ENCODE measurements at regions of chr18 and their contacts with region 1.

Region 1: DNA sequence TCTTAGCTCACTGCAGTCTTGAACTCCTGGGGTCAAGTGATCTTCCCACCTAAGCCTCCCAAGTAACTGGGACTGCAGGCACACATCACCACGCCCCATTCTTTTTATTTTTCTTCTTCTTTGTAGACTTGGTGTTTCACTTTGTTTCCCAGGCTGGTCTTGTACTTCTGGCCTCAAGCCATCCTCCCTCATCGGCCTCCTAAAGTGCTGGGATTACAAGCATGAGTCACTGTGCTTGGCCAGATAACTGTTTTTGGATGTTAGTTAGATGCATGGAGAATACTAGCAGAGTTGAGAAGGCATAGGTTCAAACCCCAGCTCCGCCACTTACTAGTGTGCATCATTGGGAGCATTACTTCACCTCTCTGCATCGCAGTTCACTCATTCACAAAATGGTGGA is 88.3 kb downstream of the TXNL1 start:
- DNase-seq: no peak
- ATAC-seq: no peak
- H3K4me3 ChIP-seq: no peak overlapping the region
- H3K27ac ChIP-seq: no peak overlapping the region
- H3K4me1 ChIP-seq: no peaks in the 10 kb centered on the region
- H3K27me3 ChIP-seq: no peaks in the 10 kb centered on the region
- CTCF ChIP-seq: no peak
- EP300 ChIP-seq: no peak
- POLR2A ChIP-seq: no peak
- RAD21 ChIP-seq: no peak

Region 2: GRCh38 chr18:56351911-56352500 is 198.1 kb before region 1 on chr18:
- CTCF ChIA-PET with region 1: no interaction called
- POLR2A ChIA-PET with region 1: no interaction called
- RAD21 ChIA-PET with region 1: no interaction called
- SMC1A ChIA-PET with region 1: no interaction called
- in situ Hi-C with region 1: no loop called
- intact Hi-C with region 1: no loop called
- DNase-seq: no peak
- ATAC-seq: no peak
- H3K4me3 ChIP-seq: no peak overlapping the region
- H3K27ac ChIP-seq: no peak overlapping the region
- H3K4me1 ChIP-seq: no peaks in the 10 kb centered on the region
- H3K27me3 ChIP-seq: no peaks in the 10 kb centered on the region
- CTCF ChIP-seq: no peak
- EP300 ChIP-seq: no peak
- POLR2A ChIP-seq: no peak
- RAD21 ChIP-seq: no peak

Region 3: DNA sequence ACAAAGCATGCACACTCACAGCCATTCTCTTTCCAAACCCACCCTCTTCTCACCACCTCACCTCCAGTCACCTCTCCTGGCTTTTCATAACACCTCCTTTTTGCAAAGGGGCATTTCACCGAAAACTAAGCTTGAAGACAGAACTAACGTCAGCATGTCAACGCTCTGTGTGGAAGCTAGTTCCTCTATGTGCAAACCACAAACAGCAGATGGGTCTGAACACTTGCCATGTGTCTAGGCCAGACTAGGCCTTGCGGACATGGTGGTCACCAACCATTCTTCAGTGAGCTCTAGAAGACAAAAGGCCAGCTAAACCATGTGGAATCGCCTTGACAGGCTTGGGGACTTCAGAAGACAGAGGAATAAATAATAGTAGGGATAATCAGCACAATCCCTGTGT is 60.2 kb before region 1 on chr18:
- CTCF ChIA-PET with region 1: no interaction called
- POLR2A ChIA-PET with region 1: no interaction called
- RAD21 ChIA-PET with region 1: no interaction called
- SMC1A ChIA-PET with region 1: no interaction called
- in situ Hi-C with region 1: loop called (anchors 10 kb)
- intact Hi-C with region 1: no loop called
- DNase-seq: no peak
- ATAC-seq: no peak
- H3K4me3 ChIP-seq: no peak overlapping the region
- H3K27ac ChIP-seq: no peak overlapping the region
- H3K4me1 ChIP-seq: no peaks in the 10 kb centered on the region
- H3K27me3 ChIP-seq: peaks cover 0 to 2% of the 10 kb centered on the region in 2 experiments; a peak in 1 of 4 replicates
- CTCF ChIP-seq: no peak
- EP300 ChIP-seq: no peak
- POLR2A ChIP-seq: no peak
- RAD21 ChIP-seq: no peak